Activated CD4-positive, alpha-beta T cell treated with anti-CD3 and anti-CD28 coated beads for 36 hours (primary cell): ENCODE measurements at regions of chr1 and their contacts with region 1.

Region 1: DNA sequence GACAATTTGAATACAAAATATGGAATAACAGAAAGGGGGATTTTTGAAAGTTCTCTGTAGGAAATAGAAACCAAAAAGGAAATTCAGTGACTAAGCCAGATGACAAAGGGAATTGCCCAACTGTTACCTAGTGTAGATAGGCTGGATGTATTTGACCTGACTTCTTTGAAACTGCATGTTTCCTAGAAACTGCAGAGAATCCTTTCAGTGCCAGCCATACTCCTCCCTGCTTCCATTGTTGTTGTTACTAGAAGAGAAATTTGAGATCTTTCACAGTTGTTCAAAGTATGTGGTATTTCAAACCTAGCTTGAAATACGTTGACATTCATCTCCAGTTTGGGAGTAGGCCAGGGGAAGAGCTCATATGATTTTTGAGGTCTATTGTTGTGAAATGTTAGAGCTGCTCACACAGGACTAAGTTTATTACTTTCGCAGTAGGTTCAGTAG is 1.8 kb upstream of the GBP5 start:
- DNase-seq: no peak
- ATAC-seq: peak; percentile 63
- H3K4me3 Mint-ChIP-seq: peak overlapping the region; percentile 98
- H3K27ac Mint-ChIP-seq: peak overlapping the region; percentile 99
- H3K4me1 Mint-ChIP-seq: peaks cover 75% of the 10 kb centered on the region
- H3K27me3 Mint-ChIP-seq: no peaks in the 10 kb centered on the region

Region 2: DNA sequence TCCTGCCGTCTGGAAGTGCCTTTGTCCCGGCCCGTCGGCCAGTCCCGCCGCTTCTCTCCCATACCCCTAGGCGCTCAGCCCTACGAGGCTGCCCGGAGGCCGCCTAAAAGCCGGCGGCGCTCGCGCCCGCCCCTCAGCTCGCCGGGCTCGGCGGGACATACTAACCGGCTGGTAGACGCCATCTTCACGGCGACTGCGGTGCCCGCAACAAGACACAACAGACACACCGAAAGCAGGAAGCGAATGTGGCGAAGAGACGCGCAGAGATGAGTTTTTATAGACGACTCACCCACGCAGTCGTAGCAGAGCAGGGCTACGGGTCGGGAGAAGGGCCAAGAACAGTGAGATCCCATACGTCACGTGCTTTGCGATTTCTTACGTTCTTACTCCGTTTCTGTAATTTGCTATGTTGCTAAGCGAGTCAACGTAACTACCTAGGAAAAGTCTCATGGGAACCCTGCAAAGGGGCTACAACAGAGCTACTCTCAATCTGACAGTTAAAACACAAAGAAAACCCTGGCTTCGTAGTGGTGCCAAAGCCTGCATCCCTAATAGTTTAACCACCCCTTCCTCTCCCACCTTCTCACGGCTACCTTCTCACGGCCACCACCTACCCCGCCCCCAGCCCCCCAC is 383.0 kb before region 1 on chr1 and contains the start of gene GTF2B:
- CTCF ChIA-PET with region 1: no interaction called
- POLR2A ChIA-PET with region 1: no interaction called
- intact Hi-C with region 1: loop called in 1 of 2 experiments (anchors 5 kb)
- DNase-seq: peak; percentile 96
- ATAC-seq: peak; percentile 87
- H3K4me3 Mint-ChIP-seq: peak within 1 kb of the TSS; percentile 88
- H3K27ac Mint-ChIP-seq: peak within 1 kb of the TSS; percentile 96
- H3K4me1 Mint-ChIP-seq: peaks cover 34% of the 10 kb centered on the region
- H3K27me3 Mint-ChIP-seq: no peaks in the 10 kb centered on the region
- total RNA-seq, gene GTF2B: 34.3 to 38.1 TPM

Region 3: DNA sequence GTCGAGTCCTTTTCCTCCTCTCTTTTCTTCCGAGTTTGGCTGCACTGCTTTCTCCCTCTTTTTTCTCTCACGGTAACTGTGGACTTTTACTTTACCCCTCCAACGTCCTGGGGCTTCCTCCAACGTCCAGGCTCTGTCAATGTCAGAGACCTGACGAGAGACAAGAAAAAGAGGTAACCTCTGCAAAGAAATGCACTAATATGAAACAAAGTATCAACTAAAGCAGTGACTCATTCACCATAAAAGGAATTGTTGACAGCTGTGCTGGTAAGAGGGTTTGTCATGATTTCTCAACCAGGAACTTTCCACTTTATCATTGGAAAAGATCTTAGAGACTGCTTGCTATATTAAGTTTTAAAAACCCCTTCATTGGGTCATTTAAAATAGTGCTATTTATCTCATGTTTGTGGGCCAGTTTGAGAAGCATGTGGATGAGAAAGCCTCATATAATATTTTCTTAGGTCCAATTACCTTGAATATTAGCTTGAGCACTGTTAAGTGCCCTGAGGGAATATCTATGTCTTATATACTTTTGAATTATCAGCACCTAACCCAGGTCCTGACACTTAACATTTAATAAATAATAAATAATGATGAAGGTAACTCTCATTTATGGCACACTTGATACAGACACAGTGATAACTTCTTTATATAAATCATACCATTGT is 148.4 kb before region 1 on chr1 and contains the start of gene GBP2:
- CTCF ChIA-PET with region 1: no interaction called
- POLR2A ChIA-PET with region 1: interaction called, 15 read pairs
- intact Hi-C with region 1: loop called (anchors 1 kb)
- DNase-seq: peak; percentile 50
- ATAC-seq: peak; percentile 77
- H3K4me3 Mint-ChIP-seq: peak within 1 kb of the TSS; percentile 87
- H3K27ac Mint-ChIP-seq: peak within 1 kb of the TSS; percentile 99
- H3K4me1 Mint-ChIP-seq: peaks cover 52% of the 10 kb centered on the region
- H3K27me3 Mint-ChIP-seq: no peaks in the 10 kb centered on the region
- total RNA-seq, gene GBP2: 253 to 294 TPM

Region 4: GRCh38 chr1:89259283-89259971 is 15.0 kb before region 1 on chr1:
- CTCF ChIA-PET with region 1: interaction called, 6 read pairs
- POLR2A ChIA-PET with region 1: no interaction called
- intact Hi-C with region 1: loop called in 1 of 2 experiments (anchors 2 kb)
- DNase-seq: peak; percentile 60
- ATAC-seq: peak; percentile 59
- H3K4me3 Mint-ChIP-seq: peak overlapping the region; percentile 41
- H3K27ac Mint-ChIP-seq: peak overlapping the region; percentile 80
- H3K4me1 Mint-ChIP-seq: peaks cover 65% of the 10 kb centered on the region
- H3K27me3 Mint-ChIP-seq: no peaks in the 10 kb centered on the region

Region 5: DNA sequence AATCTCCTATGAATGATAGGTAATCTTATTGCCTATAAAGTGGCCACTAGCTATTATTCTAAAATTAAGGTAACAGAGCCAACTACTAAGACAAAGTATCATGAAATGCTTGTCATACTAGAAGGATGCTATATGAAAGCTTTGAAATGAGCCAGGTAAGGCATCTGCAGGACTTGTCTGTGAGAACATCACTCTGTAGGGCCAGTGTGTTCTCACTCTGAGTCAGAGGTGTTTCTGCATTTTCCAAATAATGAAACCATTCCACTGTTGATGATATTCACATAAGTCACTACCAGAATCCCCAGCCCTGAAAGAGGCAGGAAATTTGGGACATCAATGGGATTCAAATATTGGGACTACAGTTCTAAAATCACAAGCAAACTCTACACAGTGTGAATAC is 24.0 kb after region 1 on chr1:
- CTCF ChIA-PET with region 1: interaction called, 11 read pairs
- POLR2A ChIA-PET with region 1: interaction called, 13 read pairs
- intact Hi-C with region 1: loop called (anchors 1 kb)
- DNase-seq: no peak
- ATAC-seq: peak; percentile 16
- H3K4me3 Mint-ChIP-seq: no peak overlapping the region
- H3K27ac Mint-ChIP-seq: no peak overlapping the region
- H3K4me1 Mint-ChIP-seq: peaks cover 59% of the 10 kb centered on the region
- H3K27me3 Mint-ChIP-seq: no peaks in the 10 kb centered on the region

Region 6: GRCh38 chr1:89358287-89358893 is 84.0 kb after region 1 on chr1:
- CTCF ChIA-PET with region 1: interaction called, 6 read pairs
- POLR2A ChIA-PET with region 1: interaction called, 3 read pairs
- intact Hi-C with region 1: loop called (anchors 2 kb)
- DNase-seq: peak; percentile 90
- ATAC-seq: peak; percentile 73
- H3K4me3 Mint-ChIP-seq: peak overlapping the region; percentile 55
- H3K27ac Mint-ChIP-seq: peak overlapping the region; percentile 84
- H3K4me1 Mint-ChIP-seq: peaks cover 46% of the 10 kb centered on the region
- H3K27me3 Mint-ChIP-seq: no peaks in the 10 kb centered on the region

Region 7: DNA sequence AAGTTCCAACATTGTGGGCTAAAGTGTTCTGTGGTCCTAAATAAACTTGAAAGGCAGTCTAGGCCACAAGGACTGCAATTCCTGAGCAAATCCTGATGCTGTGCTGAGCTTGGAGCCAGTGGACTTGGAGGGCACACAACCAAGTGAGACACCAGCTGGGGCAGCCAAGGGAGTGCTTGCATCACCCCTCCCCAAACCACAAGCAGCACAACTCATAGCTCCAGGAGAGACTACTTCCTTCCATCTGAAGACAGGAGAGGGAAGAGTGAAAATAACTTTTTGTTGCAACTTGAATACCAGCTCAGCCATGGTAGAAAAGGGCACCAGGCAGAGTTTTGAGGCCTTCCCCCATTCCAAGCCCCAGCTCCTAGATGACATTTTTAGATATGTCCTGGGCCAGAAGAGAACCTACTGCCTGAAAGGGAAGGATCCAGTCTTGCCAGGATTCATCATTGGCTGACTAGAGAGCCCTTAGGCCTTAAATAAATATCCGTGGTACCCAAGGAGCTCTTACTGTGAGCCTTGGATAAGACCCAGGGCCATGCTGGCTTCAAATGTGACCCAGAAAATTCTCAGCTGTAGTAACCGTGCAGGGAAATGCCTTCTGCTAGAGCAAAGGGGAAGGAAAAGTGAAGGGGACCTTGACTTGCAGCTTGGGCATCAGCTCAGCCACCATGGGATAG is 214.8 kb after region 1 on chr1:
- CTCF ChIA-PET with region 1: no interaction called
- POLR2A ChIA-PET with region 1: no interaction called
- intact Hi-C with region 1: no loop called
- DNase-seq: peak; percentile 22
- ATAC-seq: no peak
- H3K4me3 Mint-ChIP-seq: no peak overlapping the region
- H3K27ac Mint-ChIP-seq: peak overlapping the region; percentile 49
- H3K4me1 Mint-ChIP-seq: peaks cover 21% of the 10 kb centered on the region
- H3K27me3 Mint-ChIP-seq: no peaks in the 10 kb centered on the region

Region 8: DNA sequence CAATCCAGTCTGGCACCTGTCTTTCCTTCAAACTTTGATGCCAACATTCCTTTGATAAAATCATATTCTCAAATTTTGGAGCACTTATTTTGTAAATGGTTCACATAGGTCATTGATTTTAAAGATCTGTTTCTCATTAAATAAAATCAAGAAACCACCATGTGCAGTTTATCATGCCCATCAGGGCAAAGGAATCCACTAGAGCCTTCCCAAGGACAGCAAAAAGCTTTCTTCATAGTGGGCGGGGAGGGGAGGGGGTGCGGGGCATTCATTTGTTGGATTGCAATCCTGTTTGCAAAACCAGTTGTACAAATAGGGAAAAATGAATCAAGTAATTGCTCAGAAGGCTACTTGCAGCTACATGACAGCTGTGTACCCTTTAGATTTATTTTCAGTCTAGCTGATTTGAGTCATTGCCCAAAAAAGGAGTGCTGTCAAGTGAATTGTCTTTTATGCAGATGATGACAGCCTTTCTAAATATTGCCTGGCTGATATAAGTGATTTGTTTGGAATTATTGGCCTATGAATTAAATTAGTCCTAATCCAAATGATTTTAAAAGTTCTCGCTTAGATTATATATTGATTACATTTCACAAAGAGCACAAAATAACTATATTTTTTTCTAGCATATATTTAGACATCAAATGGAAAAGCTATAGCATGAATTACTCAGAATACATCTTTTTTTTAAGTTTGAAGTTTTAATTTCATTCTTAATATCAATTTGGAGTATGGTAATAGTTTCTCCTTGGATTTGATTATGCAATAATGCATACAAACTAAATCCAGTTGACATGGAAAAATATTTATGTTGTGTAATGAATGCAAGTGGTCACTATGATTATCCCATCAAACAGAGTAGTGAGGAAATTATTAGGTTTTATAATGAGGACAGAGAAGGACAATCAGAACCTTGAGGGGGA is 273.4 kb after region 1 on chr1:
- CTCF ChIA-PET with region 1: no interaction called
- POLR2A ChIA-PET with region 1: no interaction called
- intact Hi-C with region 1: loop called in 1 of 2 experiments (anchors 5 kb)
- DNase-seq: peak; percentile 70
- ATAC-seq: peak; percentile 48
- H3K4me3 Mint-ChIP-seq: peak overlapping the region; percentile 20
- H3K27ac Mint-ChIP-seq: peak overlapping the region; percentile 95
- H3K4me1 Mint-ChIP-seq: peaks cover 86% of the 10 kb centered on the region
- H3K27me3 Mint-ChIP-seq: no peaks in the 10 kb centered on the region